Activated CD8-positive, alpha-beta T cell treated with anti-CD3 and anti-CD28 coated beads, Interleukin-2, amount 10 ng/mL, durations not matched to agents 7 days and 5 days (primary cell): ENCODE measurements at regions of chr10 and their contacts with region 1.

Region 1: GRCh38 chr10:11178606-11179515 is 161.2 kb downstream of the CELF2 start:
- DNase-seq: peak; percentile 94
- ATAC-seq: peak; percentile 76
- H3K4me3 Mint-ChIP-seq: no peak overlapping the region
- H3K27ac Mint-ChIP-seq: no peak overlapping the region
- H3K4me1 Mint-ChIP-seq: peaks cover 99% of the 10 kb centered on the region
- H3K27me3 Mint-ChIP-seq: no peaks in the 10 kb centered on the region

Region 2: GRCh38 chr10:11058965-11059364 is 119.9 kb before region 1 on chr10:
- CTCF ChIA-PET with region 1: no interaction called
- POLR2A ChIA-PET with region 1: no interaction called
- DNase-seq: no peak
- ATAC-seq: no peak
- H3K4me3 Mint-ChIP-seq: no peak overlapping the region
- H3K27ac Mint-ChIP-seq: no peak overlapping the region
- H3K4me1 Mint-ChIP-seq: no peaks in the 10 kb centered on the region
- H3K27me3 Mint-ChIP-seq: peaks cover 24% of the 10 kb centered on the region

Region 3: DNA sequence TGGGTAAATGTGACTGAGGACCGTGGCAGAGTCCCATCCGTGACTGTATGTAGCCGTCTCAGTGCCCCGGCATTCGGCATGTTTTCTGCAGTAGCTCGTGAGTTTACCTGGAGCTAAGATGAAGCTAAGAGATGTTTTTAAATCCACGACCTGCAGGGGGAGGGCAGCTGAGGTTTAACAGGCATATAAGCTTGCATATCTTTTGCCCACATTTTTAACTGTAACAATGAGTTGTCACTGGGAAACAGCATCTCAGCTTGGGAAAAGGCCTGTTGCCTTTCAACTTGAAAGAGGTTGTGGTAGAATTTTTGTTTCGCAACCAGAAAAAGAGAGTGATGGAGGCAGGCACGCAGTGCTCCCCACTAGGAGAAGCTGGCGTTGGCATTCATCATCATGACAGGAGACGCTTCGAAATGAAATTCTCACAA is 83.5 kb before region 1 on chr10:
- CTCF ChIA-PET with region 1: no interaction called
- POLR2A ChIA-PET with region 1: no interaction called
- DNase-seq: no peak
- ATAC-seq: no peak
- H3K4me3 Mint-ChIP-seq: no peak overlapping the region
- H3K27ac Mint-ChIP-seq: no peak overlapping the region
- H3K4me1 Mint-ChIP-seq: no peaks in the 10 kb centered on the region
- H3K27me3 Mint-ChIP-seq: peaks cover 18% of the 10 kb centered on the region

Region 4: DNA sequence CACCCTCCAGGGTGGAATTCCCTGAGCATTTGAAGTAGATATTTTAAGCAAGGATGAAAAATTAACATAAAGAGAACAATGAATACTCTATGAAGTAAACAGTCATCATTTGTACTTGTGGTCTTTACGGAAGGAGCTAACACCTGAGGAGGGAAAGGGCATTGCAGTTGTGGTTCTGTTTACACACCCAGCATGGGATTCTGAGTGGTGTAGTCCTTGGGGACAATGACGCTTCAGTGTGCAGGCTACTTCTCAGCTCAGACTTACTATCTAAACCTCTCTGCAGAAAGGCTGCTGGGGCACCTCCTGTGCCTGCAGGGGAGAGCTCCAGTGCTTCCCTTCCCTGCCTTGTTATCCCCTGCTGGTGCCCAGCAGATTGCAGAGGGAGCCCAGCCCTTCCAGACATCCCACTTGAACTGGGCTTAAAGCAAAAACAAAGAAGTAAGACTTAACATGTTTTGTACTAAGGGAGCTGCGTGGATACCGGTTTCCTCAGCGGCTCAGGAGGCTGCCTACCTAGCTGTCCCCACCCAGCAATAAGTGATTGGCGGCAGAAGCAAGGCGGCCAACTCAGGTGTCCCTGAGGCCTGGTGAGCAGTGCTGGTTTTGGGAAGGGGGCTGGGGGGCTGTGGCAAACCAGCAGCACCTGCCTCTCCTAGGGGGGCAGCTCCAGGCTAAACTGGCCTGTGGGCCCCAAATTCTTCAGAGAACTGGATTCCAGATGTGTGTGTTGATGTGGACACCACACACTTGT is 72.1 kb before region 1 on chr10:
- CTCF ChIA-PET with region 1: interaction called, 19 read pairs
- POLR2A ChIA-PET with region 1: interaction called, 21 read pairs
- DNase-seq: no peak
- ATAC-seq: no peak
- H3K4me3 Mint-ChIP-seq: no peak overlapping the region
- H3K27ac Mint-ChIP-seq: no peak overlapping the region
- H3K4me1 Mint-ChIP-seq: peaks cover 16% of the 10 kb centered on the region
- H3K27me3 Mint-ChIP-seq: peaks cover 8% of the 10 kb centered on the region

Region 5: GRCh38 chr10:11145495-11145855 is 33.4 kb before region 1 on chr10:
- CTCF ChIA-PET with region 1: interaction called, 324 read pairs
- POLR2A ChIA-PET with region 1: interaction called, 1,291 read pairs
- DNase-seq: peak; percentile 86
- ATAC-seq: peak; percentile 69
- H3K4me3 Mint-ChIP-seq: peak overlapping the region; percentile 72
- H3K27ac Mint-ChIP-seq: peak overlapping the region; percentile 99
- H3K4me1 Mint-ChIP-seq: peaks cover 94% of the 10 kb centered on the region
- H3K27me3 Mint-ChIP-seq: no peaks in the 10 kb centered on the region

Region 6: GRCh38 chr10:11209830-11210181 is 30.9 kb after region 1 on chr10:
- CTCF ChIA-PET with region 1: interaction called, 5 read pairs
- POLR2A ChIA-PET with region 1: interaction called, 42 read pairs
- DNase-seq: no peak
- ATAC-seq: peak; percentile 14
- H3K4me3 Mint-ChIP-seq: peak overlapping the region; percentile 65
- H3K27ac Mint-ChIP-seq: peak overlapping the region; percentile 84
- H3K4me1 Mint-ChIP-seq: peaks cover 97% of the 10 kb centered on the region
- H3K27me3 Mint-ChIP-seq: no peaks in the 10 kb centered on the region

Region 7: DNA sequence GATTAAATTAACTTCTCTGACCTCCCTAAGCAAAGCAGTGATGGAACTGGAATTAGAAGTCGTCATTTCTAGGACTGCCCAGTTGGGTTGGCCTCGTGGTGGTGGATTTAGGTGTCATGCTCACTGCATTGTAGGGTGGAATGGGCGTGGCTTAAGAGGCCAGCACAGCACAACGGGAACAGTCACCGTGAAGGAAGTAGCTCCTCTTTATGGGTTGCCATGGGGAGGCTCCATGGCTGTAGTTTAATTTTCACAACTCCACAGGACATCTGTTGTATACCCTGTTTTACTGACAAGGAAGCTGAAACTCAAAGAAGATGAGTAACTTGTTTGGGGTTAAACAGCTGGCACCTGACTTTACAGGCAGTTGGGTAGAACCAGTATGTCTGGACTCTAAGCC is 47.1 kb after region 1 on chr10:
- CTCF ChIA-PET with region 1: interaction called, 5 read pairs
- POLR2A ChIA-PET with region 1: interaction called, 28 read pairs
- DNase-seq: peak; percentile 71
- ATAC-seq: peak; percentile 77
- H3K4me3 Mint-ChIP-seq: no peak overlapping the region
- H3K27ac Mint-ChIP-seq: peak overlapping the region; percentile 92
- H3K4me1 Mint-ChIP-seq: peaks cover 95% of the 10 kb centered on the region
- H3K27me3 Mint-ChIP-seq: no peaks in the 10 kb centered on the region